Psoas muscle (tissue), 8 donors: ENCODE measurements at regions of chr14 and their contacts with region 1.

Region 1: GRCh38 chr14:65958664-65959562 is 527.3 kb upstream of the CCDC196 start:
- DNase-seq: no peak
- ATAC-seq: peak in 2 of 4 donors; percentile 42 to 63
- H3K4me3 ChIP-seq: no peak overlapping the region
- H3K27ac ChIP-seq: no peak overlapping the region
- H3K4me1 ChIP-seq: no peaks in the 10 kb centered on the region
- H3K27me3 ChIP-seq: peaks cover 0 to 6% (median 0%) of the 10 kb centered on the region in 3 donors
- CTCF ChIP-seq: peak; percentile 43

Region 2: GRCh38 chr14:65169351-65169750 is 789.6 kb before region 1 on chr14:
- intact Hi-C with region 1: loop called (anchors 5 kb)
- DNase-seq: no peak
- ATAC-seq: peak in 2 of 4 donors; percentile 50 to 60
- H3K4me3 ChIP-seq: no peak overlapping the region
- H3K27ac ChIP-seq: no peak overlapping the region
- H3K4me1 ChIP-seq: no peaks in the 10 kb centered on the region
- H3K27me3 ChIP-seq: peaks cover 0 to 20% (median 3%) of the 10 kb centered on the region in 3 donors
- CTCF ChIP-seq: no peak

Region 3: GRCh38 chr14:65412032-65412846 is 546.7 kb before region 1 on chr14 and contains the start of gene FUT8:
- intact Hi-C with region 1: loop called in 1 of 2 experiments (anchors 2 kb)
- DNase-seq: peak; percentile 97 to 99
- ATAC-seq: peak; percentile 93 to 96 (median 94)
- H3K4me3 ChIP-seq: peak within 1 kb of the TSS; percentile 80
- H3K27ac ChIP-seq: peak within 1 kb of the TSS; percentile 81
- H3K4me1 ChIP-seq: peaks cover 5% of the 10 kb centered on the region
- H3K27me3 ChIP-seq: no peaks in the 10 kb centered on the region
- CTCF ChIP-seq: peak; percentile 63
- total RNA-seq, gene FUT8: 4.1 to 8.6 (median 6.7) TPM